ENCODE measurements at regions of chr5 and their contacts with region 1.

Region 1: GRCh38 chr5:177425801-177426565 is 493 bp upstream of the GRK6 start:
- DNase-seq: peak; percentile 100
- H3K4me3 Mint-ChIP-seq: peak overlapping the region; percentile 89
- H3K27ac Mint-ChIP-seq: peak overlapping the region; percentile 99
- H3K4me1 Mint-ChIP-seq: peaks cover 22% of the 10 kb centered on the region
- H3K27me3 Mint-ChIP-seq: no peaks in the 10 kb centered on the region
- CTCF ChIP-seq: no peak

Region 2: GRCh38 chr5:177241768-177242167 is 184.2 kb before region 1 on chr5:
- CTCF ChIA-PET with region 1: no interaction called
- POLR2A ChIA-PET with region 1: no interaction called
- intact Hi-C with region 1: no loop called
- DNase-seq: no peak
- H3K4me3 Mint-ChIP-seq: no peak overlapping the region
- H3K27ac Mint-ChIP-seq: no peak overlapping the region
- H3K4me1 Mint-ChIP-seq: no peaks in the 10 kb centered on the region
- H3K27me3 Mint-ChIP-seq: no peaks in the 10 kb centered on the region
- CTCF ChIP-seq: no peak

Region 3: DNA sequence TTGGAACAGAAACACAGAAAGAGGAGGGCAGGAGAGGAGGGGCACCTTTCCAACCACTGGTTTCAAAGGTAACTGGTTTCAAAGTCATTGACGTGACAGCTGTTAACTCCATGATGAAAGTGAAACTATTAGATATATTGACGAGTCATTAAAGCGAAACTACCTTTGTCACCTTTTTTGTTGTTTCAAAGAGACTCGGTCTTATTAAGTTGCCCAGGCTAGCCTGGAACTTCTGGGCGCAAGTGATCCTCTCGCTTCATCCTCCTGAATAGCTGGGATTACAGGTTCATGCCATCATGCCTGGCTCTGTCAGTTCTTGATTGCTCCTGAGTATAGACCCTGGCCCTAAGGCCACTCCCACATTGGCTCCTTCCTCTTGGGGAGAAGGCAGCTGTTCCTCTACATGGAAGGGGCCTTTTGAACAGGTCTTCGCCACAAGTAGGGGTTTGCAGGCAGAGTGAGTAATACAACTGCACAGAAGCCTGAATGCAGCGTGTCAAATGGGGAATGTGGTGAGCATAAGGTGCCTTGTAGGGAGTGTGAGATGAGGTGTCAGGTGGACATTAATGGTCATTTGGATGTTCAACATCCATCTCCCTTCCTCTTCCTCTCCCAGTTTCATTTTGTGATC is 13.3 kb before region 1 on chr5:
- CTCF ChIA-PET with region 1: interaction called, 134 read pairs
- POLR2A ChIA-PET with region 1: interaction called, 20 read pairs
- intact Hi-C with region 1: no loop called
- DNase-seq: no peak
- H3K4me3 Mint-ChIP-seq: no peak overlapping the region
- H3K27ac Mint-ChIP-seq: no peak overlapping the region
- H3K4me1 Mint-ChIP-seq: no peaks in the 10 kb centered on the region
- H3K27me3 Mint-ChIP-seq: no peaks in the 10 kb centered on the region
- CTCF ChIP-seq: no peak

Region 4: DNA sequence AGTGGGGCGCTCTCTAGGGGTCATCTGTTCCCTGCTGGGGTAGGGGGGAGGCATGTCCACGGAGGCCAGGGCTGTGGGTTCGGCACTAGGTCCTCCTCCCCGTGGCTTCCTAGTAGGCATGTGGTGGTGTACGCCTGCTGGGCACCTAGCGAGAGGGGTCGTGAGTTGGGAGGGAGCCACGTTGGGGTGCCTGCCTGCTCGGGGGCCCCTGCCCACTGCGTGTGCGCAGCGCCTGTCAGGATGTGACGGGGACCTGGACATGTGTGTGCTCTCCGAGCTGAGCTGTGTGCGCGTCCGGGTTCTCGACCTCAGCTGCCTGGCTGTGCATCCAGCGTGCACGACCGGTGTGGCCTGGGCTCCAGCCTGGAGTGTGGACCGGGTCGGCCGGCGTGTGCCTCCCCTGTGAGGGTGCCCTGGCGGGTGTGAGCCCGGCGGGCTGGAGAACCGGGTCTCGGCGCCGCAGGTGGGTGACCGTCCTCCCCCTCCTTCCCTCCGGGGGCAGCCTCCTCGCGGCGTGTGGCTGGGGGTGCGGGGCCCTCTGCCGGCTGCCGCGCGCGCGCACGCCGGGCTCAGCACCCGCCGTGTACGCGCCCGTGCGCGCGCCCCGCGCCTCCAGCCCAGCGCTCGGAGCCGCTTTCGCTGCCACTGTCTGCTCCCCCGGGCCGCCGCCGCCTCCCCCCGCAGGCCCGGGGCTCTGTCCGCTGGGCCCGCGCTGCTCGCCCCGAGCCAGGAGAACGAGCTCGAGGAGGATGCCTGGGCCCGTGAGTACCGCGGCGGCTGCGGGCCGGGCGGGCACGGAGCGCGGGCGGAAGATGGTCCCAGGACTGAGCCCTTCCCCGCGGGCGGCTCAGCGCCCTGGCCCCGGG is 20.4 kb after region 1 on chr5 and contains the start of gene PRR7:
- CTCF ChIA-PET with region 1: interaction called, 23 read pairs
- POLR2A ChIA-PET with region 1: interaction called, 217 read pairs
- intact Hi-C with region 1: loop called (anchors 1 kb)
- DNase-seq: peak; percentile 63
- H3K4me3 Mint-ChIP-seq: peak within 1 kb of the TSS; percentile 75
- H3K27ac Mint-ChIP-seq: peak within 1 kb of the TSS; percentile 70
- H3K4me1 Mint-ChIP-seq: peaks cover 21% of the 10 kb centered on the region
- H3K27me3 Mint-ChIP-seq: no peaks in the 10 kb centered on the region
- CTCF ChIP-seq: no peak
- total RNA-seq, gene PRR7: 15.0 and 23.2 TPM in 2 replicates

Region 5: DNA sequence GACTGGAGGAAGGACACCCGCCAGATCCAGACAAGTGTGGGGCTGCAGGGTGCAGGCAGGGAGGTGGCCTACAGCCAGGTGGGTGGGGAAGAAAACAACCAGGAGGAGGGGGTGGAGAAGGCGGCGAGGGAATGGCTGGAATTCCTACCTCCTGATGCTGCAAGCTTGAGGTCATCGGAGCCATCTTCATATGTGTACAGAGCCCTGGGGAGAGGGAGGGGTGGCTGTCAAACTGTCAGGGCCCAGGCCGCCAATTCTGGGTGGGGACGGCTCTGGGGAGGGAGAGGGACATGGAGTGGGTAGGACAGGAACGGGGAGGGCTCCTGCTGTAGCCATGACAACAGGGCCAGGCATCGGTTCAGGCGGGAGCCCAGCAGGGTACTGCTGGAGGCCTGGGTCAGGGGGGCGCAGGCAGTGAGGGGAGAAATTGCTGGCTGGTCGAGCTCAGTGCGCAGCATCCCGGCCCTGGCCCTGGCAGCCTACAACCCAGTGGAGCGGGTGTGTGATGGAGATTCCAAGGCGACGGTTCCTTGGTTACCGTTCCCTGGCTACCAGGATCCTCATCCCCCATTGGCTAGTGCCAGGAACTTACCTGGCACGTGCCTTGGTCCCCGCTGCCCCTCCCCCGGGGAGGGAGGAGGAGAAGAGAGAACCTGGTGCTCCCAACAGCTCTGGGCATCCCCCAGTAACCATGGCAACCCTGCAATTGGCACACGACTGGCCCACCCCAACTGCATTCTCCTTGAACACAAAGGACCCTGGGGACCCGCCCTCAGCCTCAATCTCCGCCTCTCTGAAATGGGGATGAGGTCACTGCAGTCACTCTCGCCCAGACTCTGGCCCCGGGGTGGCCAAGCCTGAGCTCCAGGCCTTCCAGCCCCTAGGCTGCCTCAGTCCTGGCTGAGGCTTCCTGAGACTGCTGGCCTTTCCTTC is 43.0 kb after region 1 on chr5:
- CTCF ChIA-PET with region 1: no interaction called
- POLR2A ChIA-PET with region 1: no interaction called
- intact Hi-C with region 1: no loop called
- DNase-seq: no peak
- H3K4me3 Mint-ChIP-seq: no peak overlapping the region
- H3K27ac Mint-ChIP-seq: peak overlapping the region; percentile 67
- H3K4me1 Mint-ChIP-seq: peaks cover 33% of the 10 kb centered on the region
- H3K27me3 Mint-ChIP-seq: no peaks in the 10 kb centered on the region
- CTCF ChIP-seq: no peak

Region 6: GRCh38 chr5:177478711-177479646 is 53.0 kb after region 1 on chr5:
- CTCF ChIA-PET with region 1: no interaction called
- POLR2A ChIA-PET with region 1: interaction called, 14 read pairs
- intact Hi-C with region 1: no loop called
- DNase-seq: peak; percentile 71
- H3K4me3 Mint-ChIP-seq: no peak overlapping the region
- H3K27ac Mint-ChIP-seq: peak overlapping the region; percentile 87
- H3K4me1 Mint-ChIP-seq: peaks cover 47% of the 10 kb centered on the region
- H3K27me3 Mint-ChIP-seq: no peaks in the 10 kb centered on the region
- CTCF ChIP-seq: no peak

Region 7: DNA sequence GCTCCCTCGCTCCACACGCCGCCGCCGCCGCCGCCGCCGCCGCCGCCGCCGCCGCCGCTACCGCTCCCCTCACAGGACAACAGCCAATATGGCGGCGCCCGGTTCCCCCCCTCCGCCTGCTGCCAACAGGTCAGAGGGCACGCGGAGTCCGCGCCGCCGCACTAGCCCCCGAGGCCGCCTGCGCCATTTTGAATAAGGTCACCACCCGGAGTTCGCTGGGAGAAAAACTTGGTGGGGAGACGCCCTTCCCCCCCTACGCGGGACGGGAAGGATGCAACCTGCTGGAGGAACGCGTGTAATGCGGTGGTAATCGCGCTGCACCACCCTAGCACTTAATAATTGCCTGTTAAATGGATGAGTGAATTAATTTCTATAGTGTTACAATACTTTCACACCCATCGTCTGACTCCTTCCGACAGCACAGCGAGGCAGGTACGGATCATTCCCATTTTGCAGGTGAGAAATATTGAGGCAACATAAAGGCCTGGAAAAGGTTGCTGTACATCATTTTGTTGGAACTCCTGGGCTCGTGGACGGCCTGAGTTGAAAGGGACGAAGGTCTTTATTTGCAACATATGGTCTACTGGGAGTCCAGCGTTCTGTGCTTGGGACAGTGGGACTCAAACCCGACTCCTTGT is 128.6 kb after region 1 on chr5 and contains the start of gene FAM193B:
- CTCF ChIA-PET with region 1: no interaction called
- POLR2A ChIA-PET with region 1: no interaction called
- intact Hi-C with region 1: no loop called
- DNase-seq: peak; percentile 95
- H3K4me3 Mint-ChIP-seq: peak within 1 kb of the TSS; percentile 84
- H3K27ac Mint-ChIP-seq: peak within 1 kb of the TSS; percentile 63
- H3K4me1 Mint-ChIP-seq: peaks cover 22% of the 10 kb centered on the region
- H3K27me3 Mint-ChIP-seq: no peaks in the 10 kb centered on the region
- CTCF ChIP-seq: no peak
- total RNA-seq, gene FAM193B: 73.5 and 80.4 TPM in 2 replicates